HCT116 (cell line): ENCODE measurements at regions of chr7 and their contacts with region 1.

Region 1: GRCh38 chr7:142632291-142633134 is 116.8 kb upstream of the PRSS1 start:
- DNase-seq: peak; percentile 63
- ATAC-seq: peak; percentile 98
- H3K4me3 ChIP-seq: no peak overlapping the region
- H3K27ac ChIP-seq: no peak overlapping the region
- H3K4me1 ChIP-seq: peaks cover 0 to 7% of the 10 kb centered on the region in 2 experiments; a peak in 1 of 4 replicates
- H3K27me3 ChIP-seq: peaks cover 6% of the 10 kb centered on the region; the same call in 1 of the 2 replicates
- CTCF ChIP-seq: peak; percentile 71 to 93 (median 81)
- POLR2A ChIP-seq: no peak
- RAD21 ChIP-seq: peak; percentile 82

Region 2: GRCh38 chr7:142603870-142604448 is 28.6 kb before region 1 on chr7:
- CTCF ChIA-PET with region 1: interaction called, 17 read pairs
- POLR2A ChIA-PET with region 1: no interaction called
- RAD21 ChIA-PET with region 1: no interaction called
- intact Hi-C with region 1: no loop called
- DNase-seq: peak; percentile 53
- ATAC-seq: peak; percentile 81
- H3K4me3 ChIP-seq: no peak overlapping the region; a peak in 2 of 4 replicates
- H3K27ac ChIP-seq: no peak overlapping the region
- H3K4me1 ChIP-seq: peaks cover 0 to 7% of the 10 kb centered on the region in 2 experiments; a peak in 1 of 4 replicates
- H3K27me3 ChIP-seq: no peaks in the 10 kb centered on the region
- CTCF ChIP-seq: peak; percentile 78 to 92 (median 90)
- POLR2A ChIP-seq: no peak
- RAD21 ChIP-seq: peak; percentile 86

Region 3: DNA sequence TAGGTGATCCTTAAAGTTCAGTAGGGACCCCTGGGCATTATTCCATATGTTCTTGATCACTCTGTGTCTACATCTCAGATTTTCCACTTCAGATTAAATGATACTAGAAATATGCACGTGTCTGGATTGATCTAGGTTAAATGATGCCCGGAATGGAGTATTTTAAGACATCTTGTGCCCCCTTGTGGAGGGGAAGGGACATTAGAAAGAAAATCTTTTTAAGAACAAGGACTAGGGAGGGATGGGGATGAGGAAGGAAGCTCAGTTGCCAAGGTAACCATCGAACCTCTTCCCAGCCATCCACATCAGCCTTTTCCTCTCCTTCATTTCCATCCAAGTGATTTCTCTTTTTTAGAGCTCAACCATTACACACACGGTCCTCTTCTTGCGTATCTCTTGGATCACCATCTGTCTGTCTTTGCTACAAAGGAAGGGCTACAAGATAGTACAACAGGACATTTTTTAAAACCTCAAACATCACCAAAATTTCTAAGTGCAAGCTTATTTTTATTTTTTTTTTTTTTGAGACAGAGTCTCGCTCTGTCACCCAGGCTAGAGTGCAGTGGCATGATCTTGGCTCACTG is 178.7 kb after region 1 on chr7:
- CTCF ChIA-PET with region 1: interaction called, 62 read pairs
- POLR2A ChIA-PET with region 1: no interaction called
- RAD21 ChIA-PET with region 1: interaction called in 1 of 2 experiments, 3 read pairs
- intact Hi-C with region 1: loop called (anchors 1 kb)
- DNase-seq: peak; percentile 39
- ATAC-seq: peak; percentile 77
- H3K4me3 ChIP-seq: no peak overlapping the region
- H3K27ac ChIP-seq: no peak overlapping the region
- H3K4me1 ChIP-seq: peaks cover 0 to 24% of the 10 kb centered on the region in 2 experiments; a peak in 3 of 4 replicates
- H3K27me3 ChIP-seq: peaks cover 35% of the 10 kb centered on the region; the same call in 1 of the 2 replicates
- CTCF ChIP-seq: peak; percentile 57 to 80 (median 71)
- POLR2A ChIP-seq: no peak
- RAD21 ChIP-seq: peak; percentile 74

Region 4: GRCh38 chr7:142866361-142867058 is 234.0 kb after region 1 on chr7:
- CTCF ChIA-PET with region 1: interaction called, 13 read pairs
- POLR2A ChIA-PET with region 1: no interaction called
- RAD21 ChIA-PET with region 1: no interaction called
- intact Hi-C with region 1: loop called (anchors 1 kb)
- DNase-seq: no peak
- ATAC-seq: peak; percentile 96
- H3K4me3 ChIP-seq: no peak overlapping the region
- H3K27ac ChIP-seq: no peak overlapping the region
- H3K4me1 ChIP-seq: no peaks in the 10 kb centered on the region
- H3K27me3 ChIP-seq: no peaks in the 10 kb centered on the region
- CTCF ChIP-seq: peak; percentile 66 to 75 (median 74); a peak in 5 of 6 replicates
- POLR2A ChIP-seq: no peak
- RAD21 ChIP-seq: peak; percentile 66

Region 5: DNA sequence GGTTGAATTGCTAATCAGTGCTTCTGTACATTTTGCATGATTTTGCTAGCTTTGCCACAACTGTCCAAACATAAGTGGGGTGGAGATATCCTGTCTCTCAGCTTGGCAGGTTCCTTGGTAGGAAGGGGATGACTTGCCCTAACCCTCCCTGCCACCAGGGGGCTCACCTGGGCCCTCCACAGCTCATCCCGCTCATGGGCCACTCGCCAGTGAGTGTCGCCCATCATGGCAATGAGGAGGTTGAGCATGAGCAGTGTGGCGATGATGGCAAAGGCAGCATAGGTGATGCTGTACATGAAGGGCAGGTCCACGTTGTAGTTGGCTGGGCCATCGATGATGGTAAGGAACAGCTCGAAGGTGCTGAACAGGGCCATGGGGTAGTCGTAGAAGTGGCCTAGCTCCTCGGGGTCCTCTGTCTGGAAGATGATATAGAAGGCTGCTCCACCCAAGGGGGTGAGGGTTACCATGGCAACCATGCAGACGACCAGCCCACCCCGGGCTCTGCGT is 240.8 kb after region 1 on chr7:
- CTCF ChIA-PET with region 1: interaction called, 10 read pairs
- POLR2A ChIA-PET with region 1: no interaction called
- RAD21 ChIA-PET with region 1: interaction called in 1 of 2 experiments, 3 read pairs
- intact Hi-C with region 1: no loop called
- DNase-seq: peak; percentile 28
- ATAC-seq: peak; percentile 94
- H3K4me3 ChIP-seq: no peak overlapping the region
- H3K27ac ChIP-seq: no peak overlapping the region
- H3K4me1 ChIP-seq: no peaks in the 10 kb centered on the region
- H3K27me3 ChIP-seq: no peaks in the 10 kb centered on the region
- CTCF ChIP-seq: peak; percentile 76 to 93 (median 90)
- POLR2A ChIP-seq: no peak
- RAD21 ChIP-seq: peak; percentile 40; the same call in 1 of the 2 replicates

Region 6: GRCh38 chr7:143002106-143002505 is 369.6 kb after region 1 on chr7:
- CTCF ChIA-PET with region 1: interaction called, 11 read pairs
- POLR2A ChIA-PET with region 1: no interaction called
- RAD21 ChIA-PET with region 1: no interaction called
- intact Hi-C with region 1: loop called (anchors 1 kb)
- DNase-seq: peak; percentile 24
- ATAC-seq: peak; percentile 80
- H3K4me3 ChIP-seq: no peak overlapping the region
- H3K27ac ChIP-seq: no peak overlapping the region
- H3K4me1 ChIP-seq: peaks cover 0 to 8% of the 10 kb centered on the region in 2 experiments; a peak in 1 of 4 replicates
- H3K27me3 ChIP-seq: no peaks in the 10 kb centered on the region
- CTCF ChIP-seq: peak; percentile 37 to 77 (median 58); a peak in 5 of 6 replicates
- POLR2A ChIP-seq: no peak
- RAD21 ChIP-seq: peak; percentile 83